ENCODE measurements at regions of chr17 and their contacts with region 1.

Region 1: GRCh38 chr17:74994476-74994875 is 7.0 kb downstream of the CDR2L start:
- DNase-seq: no peak
- ATAC-seq: no peak
- H3K4me3 ChIP-seq: no peak overlapping the region
- H3K27ac ChIP-seq: no peak overlapping the region
- H3K4me1 ChIP-seq: no peaks in the 10 kb centered on the region
- H3K27me3 ChIP-seq: peaks cover 0 to 3% of the 10 kb centered on the region in 2 experiments; a peak in 1 of 4 replicates
- CTCF ChIP-seq: no peak
- EP300 ChIP-seq: no peak
- POLR2A ChIP-seq: no peak
- RAD21 ChIP-seq: no peak

Region 2: GRCh38 chr17:75012346-75013091 is 18.0 kb after region 1 on chr17 and contains the start of gene MRPL58:
- CTCF ChIA-PET with region 1: interaction called, 17 read pairs
- POLR2A ChIA-PET with region 1: interaction called, 4 read pairs
- RAD21 ChIA-PET with region 1: interaction called, 3 read pairs
- SMC1A ChIA-PET with region 1: interaction called, 3 read pairs
- in situ Hi-C with region 1: no loop called
- intact Hi-C with region 1: no loop called
- DNase-seq: peak; percentile 60
- ATAC-seq: peak; percentile 95
- H3K4me3 ChIP-seq: peak within 1 kb of the TSS; percentile 94
- H3K27ac ChIP-seq: peak within 1 kb of the TSS; percentile 67
- H3K4me1 ChIP-seq: peaks cover 8% of the 10 kb centered on the region
- H3K27me3 ChIP-seq: no peaks in the 10 kb centered on the region; a peak in 1 of 4 replicates
- CTCF ChIP-seq: peak in 2 of 3 experiments; percentile 22 to 54; a peak in 4 of 6 replicates
- EP300 ChIP-seq: no peak
- POLR2A ChIP-seq: peak; percentile 99
- RAD21 ChIP-seq: no peak
- polyA plus RNA-seq, gene MRPL58: 23.0 to 43.7 TPM

Region 3: GRCh38 chr17:75034236-75034908 is 39.9 kb after region 1 on chr17:
- CTCF ChIA-PET with region 1: no interaction called
- POLR2A ChIA-PET with region 1: no interaction called
- RAD21 ChIA-PET with region 1: no interaction called
- SMC1A ChIA-PET with region 1: no interaction called
- in situ Hi-C with region 1: no loop called
- intact Hi-C with region 1: no loop called
- DNase-seq: peak; percentile 88
- ATAC-seq: peak; percentile 86
- H3K4me3 ChIP-seq: peak overlapping the region; percentile 84
- H3K27ac ChIP-seq: peak overlapping the region; percentile 72
- H3K4me1 ChIP-seq: 0 out of 2 replicates have a peak, but pooled peaks cover 4% of the 10 kb centered on the region
- H3K27me3 ChIP-seq: no peaks in the 10 kb centered on the region
- CTCF ChIP-seq: no peak
- EP300 ChIP-seq: no peak; a peak in 1 of 4 replicates
- POLR2A ChIP-seq: no peak; the same call in none of the 2 replicates
- RAD21 ChIP-seq: no peak